Dorsolateral prefrontal cortex (tissue), 120 donors: ENCODE measurements at regions of chr3 and their contacts with region 1.

Region 1: DNA sequence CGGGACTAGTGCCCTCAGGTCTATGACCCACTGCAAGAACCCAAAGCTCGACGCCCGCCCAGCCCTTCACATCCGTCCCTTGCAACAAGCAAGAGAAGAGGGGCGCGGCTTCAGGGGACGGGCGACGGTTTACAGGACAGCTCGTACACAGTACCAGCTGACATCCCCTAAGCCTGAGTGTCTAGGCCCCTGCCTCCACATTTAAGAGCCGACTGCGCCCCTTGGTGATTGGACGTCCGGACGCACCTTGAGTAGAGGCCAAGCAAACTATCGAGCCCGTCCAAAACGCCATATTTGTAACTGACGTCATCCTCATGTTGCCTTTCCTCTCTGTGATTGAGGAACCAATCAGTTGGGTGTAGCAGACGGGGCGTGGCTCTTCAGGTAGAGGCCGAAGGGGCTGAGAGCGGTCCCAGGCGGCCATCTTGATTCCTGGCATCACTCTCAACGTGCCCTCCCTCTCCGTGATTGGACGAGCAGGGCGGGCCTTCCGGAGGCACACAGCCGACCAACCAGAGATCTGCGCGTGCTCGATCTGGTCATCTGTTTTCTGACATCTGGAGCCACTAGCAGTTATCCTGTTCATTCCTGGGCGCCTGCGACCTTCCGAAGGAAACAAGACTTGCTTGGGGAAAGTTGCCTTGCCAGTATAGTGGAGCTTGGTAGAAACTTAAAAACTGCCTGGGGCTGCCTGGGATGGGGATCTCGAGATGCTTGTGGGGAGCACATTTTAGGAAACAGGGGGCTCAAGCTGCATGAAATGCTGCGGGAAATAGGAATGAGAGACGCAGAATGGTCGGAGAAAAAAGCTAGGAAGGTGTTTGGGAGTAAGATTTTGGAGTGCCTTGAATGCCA is 4.0 kb upstream of the RPL14 start:
- DNase-seq: peak; percentile 93 to 99 (median 98)
- H3K4me3 ChIP-seq: peak overlapping the region; percentile 56 to 95 (median 81)
- H3K27ac ChIP-seq: peak overlapping the region; percentile 39 to 99 (median 95)
- H3K27me3 ChIP-seq: no peaks in the 10 kb centered on the region
- CTCF ChIP-seq: peak in 31 of 56 donors; percentile 2 to 52 (median 22)

Region 2: DNA sequence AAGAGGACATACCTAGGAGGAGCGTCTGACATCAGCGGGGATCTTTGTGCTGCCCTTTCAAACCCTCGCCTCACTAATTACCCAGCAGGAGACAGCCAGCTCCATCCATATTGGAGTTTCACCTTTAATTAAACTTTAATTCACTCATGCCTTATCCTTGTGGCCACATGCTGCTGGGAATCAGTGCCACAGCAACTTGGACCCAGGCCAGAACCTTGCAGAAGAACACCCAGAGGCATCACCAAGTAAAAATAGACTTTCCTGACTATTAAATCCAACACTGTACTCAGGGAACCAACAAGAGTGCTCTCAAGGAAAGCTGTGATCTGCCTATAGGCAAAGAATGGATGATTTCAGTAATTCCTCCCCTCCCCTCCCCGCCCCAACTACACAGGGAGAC is 119.7 kb before region 1 on chr3:
- intact Hi-C with region 1: loop called in 1 of 2 experiments (anchors 5 kb)
- DNase-seq: no peak
- H3K4me3 ChIP-seq: no peak overlapping the region
- H3K27ac ChIP-seq: no peak overlapping the region
- H3K27me3 ChIP-seq: no peaks in the 10 kb centered on the region
- CTCF ChIP-seq: no peak

Region 3: GRCh38 chr3:40369716-40370115 is 83.4 kb before region 1 on chr3:
- intact Hi-C with region 1: no loop called
- DNase-seq: no peak
- H3K4me3 ChIP-seq: no peak overlapping the region
- H3K27ac ChIP-seq: no peak overlapping the region
- H3K27me3 ChIP-seq: no peaks in the 10 kb centered on the region
- CTCF ChIP-seq: no peak

Region 4: DNA sequence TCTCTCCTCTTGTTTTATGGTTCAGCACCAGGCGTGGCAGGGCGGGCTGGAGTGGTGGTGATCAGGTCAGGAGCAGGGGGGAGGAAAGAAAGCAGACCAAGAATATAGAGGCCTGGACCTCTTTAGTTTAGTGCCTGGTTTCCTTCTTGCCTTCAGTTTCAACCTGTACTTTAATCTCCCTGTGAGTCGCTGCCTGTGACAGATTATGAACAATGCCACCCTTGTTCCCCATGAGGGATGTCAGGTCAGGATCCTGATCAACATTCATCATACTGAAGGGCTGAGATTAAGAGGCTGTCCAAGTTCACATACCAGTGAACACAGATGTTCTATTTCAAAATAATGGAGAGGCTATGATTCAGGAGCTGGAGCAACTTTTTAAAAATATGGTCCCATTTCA is 54.8 kb before region 1 on chr3:
- intact Hi-C with region 1: no loop called
- DNase-seq: no peak
- H3K4me3 ChIP-seq: no peak overlapping the region
- H3K27ac ChIP-seq: no peak overlapping the region
- H3K27me3 ChIP-seq: no peaks in the 10 kb centered on the region
- CTCF ChIP-seq: no peak

Region 5: GRCh38 chr3:40505599-40506462 is 52.7 kb after region 1 on chr3 and contains the start of gene ZNF620:
- intact Hi-C with region 1: loop called in 1 of 2 experiments (anchors 5 kb)
- DNase-seq: peak; percentile 60 to 87 (median 82)
- H3K4me3 ChIP-seq: peak within 1 kb of the TSS; percentile 52 to 89 (median 77)
- H3K27ac ChIP-seq: peak within 1 kb of the TSS in 58 of 59 donors; percentile 0 to 94 (median 84)
- H3K27me3 ChIP-seq: no peaks in the 10 kb centered on the region
- CTCF ChIP-seq: peak in 51 of 56 donors; percentile 15 to 63 (median 43)
- total RNA-seq, gene ZNF620: 3.7 to 10.7 (median 7.0) TPM

Region 6: DNA sequence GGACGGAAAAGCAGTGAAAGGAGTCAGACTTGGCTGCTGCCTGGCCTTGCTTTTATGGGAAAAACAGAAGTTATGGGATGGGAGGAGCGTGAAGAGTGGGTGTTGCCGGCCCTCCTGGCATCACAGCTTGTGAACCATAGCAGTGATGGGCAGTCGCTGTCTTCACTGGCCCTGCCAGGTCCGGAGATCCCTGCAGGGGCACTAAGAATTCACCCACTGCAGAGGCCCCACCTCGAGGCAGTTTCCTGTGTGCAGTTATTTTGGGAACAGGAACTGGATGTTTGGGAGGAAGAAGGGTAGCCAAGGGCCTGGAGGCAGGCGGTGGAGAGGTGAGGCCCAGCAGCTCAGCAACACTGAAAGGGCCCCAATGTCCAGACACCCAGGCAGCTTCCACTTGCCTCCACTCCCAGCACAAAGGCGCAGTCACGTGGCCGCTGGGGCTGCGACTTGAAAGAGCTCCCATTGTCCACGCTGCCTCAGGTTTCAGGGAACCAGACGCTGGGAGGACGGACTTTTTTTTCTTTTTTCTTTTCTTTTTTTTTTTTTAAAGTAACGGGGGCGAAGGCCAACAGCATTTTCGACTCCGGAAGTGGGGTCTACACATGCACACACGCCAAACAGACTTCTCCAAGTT is 327.3 kb after region 1 on chr3:
- intact Hi-C with region 1: loop called in 1 of 2 experiments (anchors 5 kb)
- DNase-seq: peak; percentile 74 to 93 (median 87)
- H3K4me3 ChIP-seq: peak overlapping the region; percentile 8 to 70 (median 43)
- H3K27ac ChIP-seq: peak overlapping the region in 58 of 59 donors; percentile 0 to 88 (median 76)
- H3K27me3 ChIP-seq: no peaks in the 10 kb centered on the region
- CTCF ChIP-seq: peak in 30 of 56 donors; percentile 6 to 42 (median 22)

Region 7: GRCh38 chr3:41411065-41411464 is 958.0 kb after region 1 on chr3:
- intact Hi-C with region 1: no loop called
- DNase-seq: no peak
- H3K4me3 ChIP-seq: no peak overlapping the region
- H3K27ac ChIP-seq: no peak overlapping the region
- H3K27me3 ChIP-seq: no peaks in the 10 kb centered on the region
- CTCF ChIP-seq: no peak